AG04450 (cell line): ENCODE measurements at regions of chr6 and their contacts with region 1.

Region 1: GRCh38 chr6:35583893-35584688 is 71.4 kb upstream of the TULP1 start:
- DNase-seq: peak; percentile 53
- H3K4me3 ChIP-seq: no peak overlapping the region
- H3K27ac ChIP-seq: no peak overlapping the region
- H3K27me3 ChIP-seq: no peaks in the 10 kb centered on the region
- CTCF ChIP-seq: peak; percentile 88

Region 2: DNA sequence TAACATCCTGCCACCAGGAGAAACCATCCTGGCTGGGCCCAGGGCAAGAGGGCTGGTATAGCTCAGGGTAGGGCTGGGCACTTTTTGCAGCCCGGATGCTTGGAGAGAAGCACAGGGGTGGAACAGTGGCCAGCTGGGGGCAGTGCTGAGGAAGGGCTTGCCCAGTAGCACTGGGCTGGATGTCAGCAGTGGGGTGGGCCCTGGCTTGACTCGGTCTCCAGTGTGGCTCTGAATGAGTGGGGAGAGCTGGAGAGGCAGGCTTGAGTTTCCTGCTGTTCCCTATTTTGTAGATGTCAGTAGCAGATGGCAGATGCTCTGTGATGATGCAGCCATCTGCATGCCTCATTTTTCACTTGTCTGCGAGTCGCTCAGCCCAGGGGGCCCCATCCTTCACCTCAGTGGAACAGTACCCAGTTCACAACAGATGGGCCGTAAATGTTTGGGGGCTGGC is 15.1 kb before region 1 on chr6:
- CTCF ChIA-PET with region 1: interaction called, 14 read pairs
- POLR2A ChIA-PET with region 1: no interaction called
- DNase-seq: no peak
- H3K4me3 ChIP-seq: no peak overlapping the region
- H3K27ac ChIP-seq: no peak overlapping the region
- H3K27me3 ChIP-seq: peaks cover 18% of the 10 kb centered on the region
- CTCF ChIP-seq: peak; percentile 26; the same call in 1 of the 2 replicates

Region 3: DNA sequence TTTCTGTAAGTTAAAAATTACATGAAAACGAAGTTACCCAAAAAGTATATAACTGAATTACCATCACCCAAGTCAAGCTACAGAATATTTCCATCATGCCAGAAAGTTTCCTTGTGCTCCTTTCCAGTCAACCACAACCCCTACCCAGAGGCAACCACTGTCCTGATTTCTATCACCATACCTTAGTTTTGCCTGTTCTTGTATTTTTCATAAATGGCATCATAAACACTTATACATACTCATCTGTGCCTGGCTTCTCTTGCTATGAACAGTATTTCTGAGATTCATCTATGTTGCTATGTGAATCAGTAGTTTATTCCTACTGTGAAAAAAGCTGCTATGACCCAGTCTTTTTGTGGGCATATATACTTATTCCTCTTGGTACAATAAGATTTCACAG is 97.2 kb after region 1 on chr6:
- CTCF ChIA-PET with region 1: interaction called, 36 read pairs
- POLR2A ChIA-PET with region 1: interaction called, 6 read pairs
- DNase-seq: no peak
- H3K4me3 ChIP-seq: no peak overlapping the region
- H3K27ac ChIP-seq: no peak overlapping the region
- H3K27me3 ChIP-seq: no peaks in the 10 kb centered on the region
- CTCF ChIP-seq: no peak

Region 4: GRCh38 chr6:35688581-35689322 is 104.7 kb after region 1 on chr6 and contains the start of gene FKBP5:
- CTCF ChIA-PET with region 1: interaction called, 36 read pairs
- POLR2A ChIA-PET with region 1: no interaction called
- DNase-seq: peak; percentile 67
- H3K4me3 ChIP-seq: peak within 1 kb of the TSS; percentile 75
- H3K27ac ChIP-seq: no peak within 1 kb of the TSS
- H3K27me3 ChIP-seq: no peaks in the 10 kb centered on the region
- CTCF ChIP-seq: no peak
- polyA plus RNA-seq, gene FKBP5: 6.9 and 7.6 TPM in 2 replicates